Heart left ventricle (tissue), 16 donors: ENCODE measurements at regions of chr10 and their contacts with region 1.

Region 1: GRCh38 chr10:103153302-103154197 is 39.5 kb downstream of the NT5C2 start:
- DNase-seq: peak in 1 of 5 donors; percentile 20
- ATAC-seq: peak in 2 of 4 donors; percentile 57 to 59
- H3K4me3 ChIP-seq: peak overlapping the region in 9 of 12 donors; percentile 16 to 46 (median 40)
- H3K27ac ChIP-seq: peak overlapping the region; percentile 64 to 87 (median 77)
- H3K4me1 ChIP-seq: peaks cover 0 to 67% (median 50%) of the 10 kb centered on the region in 12 donors
- H3K27me3 ChIP-seq: no peaks in the 10 kb centered on the region
- CTCF ChIP-seq: no peak
- POLR2A ChIP-seq: no peak

Region 2: GRCh38 chr10:103111031-103111917 is 42.3 kb before region 1 on chr10:
- intact Hi-C with region 1: loop called in 2 of 10 experiments (anchors 5 kb)
- DNase-seq: no peak
- ATAC-seq: peak; percentile 85 to 94 (median 86)
- H3K4me3 ChIP-seq: peak overlapping the region in 4 of 12 donors; percentile 6 to 27 (median 9)
- H3K27ac ChIP-seq: peak overlapping the region; percentile 17 to 83 (median 60)
- H3K4me1 ChIP-seq: peaks cover 8 to 61% (median 34%) of the 10 kb centered on the region in 12 donors
- H3K27me3 ChIP-seq: no peaks in the 10 kb centered on the region
- CTCF ChIP-seq: peak in 1 of 12 donors; percentile 16
- POLR2A ChIP-seq: no peak

Region 3: DNA sequence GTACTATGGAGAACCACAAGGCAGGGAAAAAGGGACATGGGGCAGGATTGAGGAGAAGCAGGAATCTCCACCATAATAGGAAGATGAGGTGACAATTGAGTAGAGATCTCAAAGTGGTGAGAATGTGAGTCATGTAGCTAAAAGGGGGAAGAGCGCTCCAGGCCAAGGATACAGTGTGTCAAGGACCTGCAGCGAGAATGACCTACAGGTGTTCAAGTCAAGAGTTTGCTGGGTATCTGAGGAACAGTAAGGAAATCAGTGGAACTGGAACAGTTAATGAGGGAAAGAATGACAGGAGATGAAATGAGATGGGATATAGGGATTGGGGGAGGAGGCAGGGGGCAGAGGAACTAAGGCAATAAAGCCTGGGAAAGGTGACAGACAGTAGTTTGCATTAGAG is 1002.0 kb after region 1 on chr10:
- intact Hi-C with region 1: no loop called
- DNase-seq: no peak
- ATAC-seq: no peak
- H3K4me3 ChIP-seq: no peak overlapping the region
- H3K27ac ChIP-seq: no peak overlapping the region
- H3K4me1 ChIP-seq: no peaks in the 10 kb centered on the region
- H3K27me3 ChIP-seq: peaks cover 0 to 11% (median 0%) of the 10 kb centered on the region in 9 donors
- CTCF ChIP-seq: no peak
- POLR2A ChIP-seq: no peak